Naive thymus-derived CD4-positive, alpha-beta T cell (primary cell): ENCODE measurements at regions of chr6 and their contacts with region 1.

Region 1: GRCh38 chr6:137799950-137800568 is 67.0 kb upstream of the TNFAIP3 start:
- DNase-seq: peak in 7 of 9 donors; percentile 75 to 87 (median 81)
- ATAC-seq: peak; percentile 91
- H3K4me3 ChIP-seq: no peak overlapping the region
- H3K4me3 Mint-ChIP-seq: peak overlapping the region in 9 of 10 donors; percentile 0 to 71 (median 49)
- H3K27ac ChIP-seq: peak overlapping the region; percentile 50
- H3K27ac Mint-ChIP-seq: peak overlapping the region; percentile 70 to 97 (median 89)
- H3K4me1 ChIP-seq: peaks cover 15 to 47% of the 10 kb centered on the region in 2 donors
- H3K4me1 Mint-ChIP-seq: peaks cover 27 to 72% (median 64%) of the 10 kb centered on the region in 7 donors
- H3K27me3 ChIP-seq: no peaks in the 10 kb centered on the region
- H3K27me3 Mint-ChIP-seq: no peaks in the 10 kb centered on the region

Region 2: DNA sequence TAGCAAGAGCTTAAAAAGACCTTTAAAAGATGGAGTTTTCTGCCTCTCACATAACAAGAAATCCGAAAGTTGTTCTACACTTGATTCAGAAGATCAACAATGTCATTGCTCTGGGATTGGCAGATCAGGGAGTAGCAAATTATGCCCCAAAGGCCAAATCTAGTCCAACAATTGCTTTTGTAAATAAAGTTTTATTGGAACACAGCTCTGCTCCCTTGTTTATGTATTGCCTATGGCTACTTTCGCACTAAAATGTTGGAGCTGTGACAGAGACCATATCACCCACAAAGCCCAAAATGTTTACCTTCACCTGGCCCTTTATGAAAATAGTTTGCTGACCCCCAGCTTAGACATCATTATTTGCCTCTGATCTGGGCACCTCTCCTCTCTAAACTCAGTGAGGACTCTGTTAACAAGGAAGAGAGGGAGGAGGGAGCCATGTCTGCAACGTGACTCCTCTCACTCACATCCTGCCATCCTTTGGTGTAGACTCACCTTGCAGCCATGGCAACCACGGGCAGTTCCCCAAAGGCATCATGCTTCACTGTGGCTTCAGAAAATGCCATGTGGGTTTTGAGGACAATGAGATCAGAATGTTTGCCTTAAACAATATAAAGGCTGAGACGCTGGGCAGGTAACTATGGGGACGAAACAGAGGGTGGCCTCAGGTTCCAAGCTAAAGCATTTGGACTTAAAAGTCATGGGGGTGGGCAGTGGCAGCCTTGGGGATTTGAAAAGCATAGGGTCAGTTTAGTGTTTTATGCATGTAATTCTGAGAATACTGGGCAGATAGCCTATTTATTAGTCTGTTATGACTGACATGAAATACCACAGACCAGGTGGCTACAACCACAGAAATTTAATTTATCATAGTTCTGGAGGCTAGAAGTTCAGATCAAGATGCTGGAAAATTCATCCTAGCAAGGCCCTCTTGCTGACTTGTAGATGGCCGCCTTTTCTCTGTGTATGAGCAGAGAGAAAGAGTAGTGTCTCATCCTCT is 82.7 kb before region 1 on chr6:
- CTCF ChIA-PET with region 1: interaction called, 3 read pairs
- POLR2A ChIA-PET with region 1: interaction called, 4 read pairs
- intact Hi-C with region 1: loop called in 1 of 2 experiments (anchors 2 kb)
- DNase-seq: peak; percentile 44 to 85 (median 76)
- ATAC-seq: peak; percentile 74
- H3K4me3 ChIP-seq: no peak overlapping the region
- H3K4me3 Mint-ChIP-seq: peak overlapping the region in 8 of 10 donors; percentile 1 to 76 (median 23)
- H3K27ac ChIP-seq: peak overlapping the region; percentile 65
- H3K27ac Mint-ChIP-seq: peak overlapping the region; percentile 56 to 96 (median 93)
- H3K4me1 ChIP-seq: peaks cover 17 to 36% of the 10 kb centered on the region in 2 donors
- H3K4me1 Mint-ChIP-seq: peaks cover 23 to 65% (median 40%) of the 10 kb centered on the region in 7 donors
- H3K27me3 ChIP-seq: no peaks in the 10 kb centered on the region
- H3K27me3 Mint-ChIP-seq: no peaks in the 10 kb centered on the region

Region 3: DNA sequence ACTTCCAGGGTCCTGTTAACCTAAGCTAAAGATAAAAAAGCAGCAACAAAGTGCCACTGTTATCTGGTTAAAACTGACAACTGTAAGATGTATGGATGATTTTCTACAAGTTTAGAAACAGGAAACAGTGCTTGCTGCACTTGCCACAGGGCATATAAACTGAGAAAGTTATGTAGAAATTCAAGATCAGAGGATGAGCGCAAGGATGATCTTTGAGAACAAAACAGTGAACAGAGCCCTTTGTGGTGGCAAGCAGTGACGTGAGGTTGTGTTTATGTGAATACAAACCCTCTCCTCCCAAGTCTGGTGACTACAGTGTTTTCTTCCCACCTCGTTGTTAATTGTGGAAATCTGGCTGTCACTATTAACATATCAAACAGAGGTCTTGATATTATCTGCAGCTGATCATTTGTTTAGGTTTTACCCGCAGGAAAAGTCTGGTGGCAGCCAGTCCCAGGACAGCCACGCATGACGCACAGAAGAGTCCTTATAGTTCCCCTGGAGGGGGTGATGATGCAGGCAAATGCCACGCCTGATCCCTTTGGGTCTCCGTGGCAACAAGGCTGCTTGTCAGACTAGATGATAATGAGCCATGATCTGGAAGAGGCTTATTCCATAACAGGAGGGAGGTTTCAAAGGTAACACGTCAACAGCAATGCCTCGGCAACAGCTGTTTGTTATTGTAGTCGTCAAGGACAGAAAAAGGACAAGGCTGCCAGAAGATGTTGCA is 23.9 kb after region 1 on chr6:
- CTCF ChIA-PET with region 1: interaction called, 11 read pairs
- POLR2A ChIA-PET with region 1: interaction called, 18 read pairs
- intact Hi-C with region 1: loop called (anchors 1 kb)
- DNase-seq: peak; percentile 59 to 100 (median 95)
- ATAC-seq: peak; percentile 87
- H3K4me3 ChIP-seq: peak overlapping the region; percentile 33
- H3K4me3 Mint-ChIP-seq: peak overlapping the region; percentile 72 to 86 (median 79)
- H3K27ac ChIP-seq: peak overlapping the region; percentile 99
- H3K27ac Mint-ChIP-seq: peak overlapping the region; percentile 96 to 100 (median 100)
- H3K4me1 ChIP-seq: peaks cover 43 to 76% of the 10 kb centered on the region in 2 donors
- H3K4me1 Mint-ChIP-seq: peaks cover 48 to 98% (median 93%) of the 10 kb centered on the region in 7 donors
- H3K27me3 ChIP-seq: no peaks in the 10 kb centered on the region
- H3K27me3 Mint-ChIP-seq: no peaks in the 10 kb centered on the region

Region 4: DNA sequence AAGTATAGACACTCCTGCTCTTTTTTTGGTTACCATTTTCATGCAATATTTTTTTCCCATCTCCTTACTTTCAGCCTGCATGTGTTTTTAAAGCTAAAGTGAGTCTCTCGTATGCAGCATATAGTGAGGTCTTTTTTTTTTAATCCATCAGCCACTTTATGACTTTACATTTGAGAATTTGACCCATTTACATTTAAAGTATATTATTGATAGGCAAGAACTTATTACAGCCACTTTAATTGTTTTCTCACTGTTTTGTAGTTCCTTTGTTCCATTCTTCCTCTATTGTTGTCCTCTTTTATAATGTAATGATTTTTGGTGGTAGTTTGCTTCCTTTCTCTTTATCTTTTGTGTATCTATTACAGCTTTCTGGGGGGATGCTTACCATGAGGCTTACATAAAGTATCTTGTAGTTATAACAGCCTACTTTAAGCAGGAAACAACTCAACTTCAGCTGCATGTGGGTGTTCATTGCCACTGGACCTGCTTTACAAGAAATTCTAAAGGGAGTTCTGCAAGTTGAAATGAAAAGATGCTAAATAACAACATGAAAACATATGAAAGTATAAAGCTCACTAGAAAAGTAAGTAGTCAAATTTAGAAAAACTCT is 138.8 kb after region 1 on chr6:
- CTCF ChIA-PET with region 1: interaction called, 55 read pairs
- POLR2A ChIA-PET with region 1: no interaction called
- intact Hi-C with region 1: loop called in 1 of 2 experiments (anchors 1 kb)
- DNase-seq: no peak
- ATAC-seq: no peak
- H3K4me3 ChIP-seq: no peak overlapping the region
- H3K4me3 Mint-ChIP-seq: no peak overlapping the region
- H3K27ac ChIP-seq: no peak overlapping the region
- H3K27ac Mint-ChIP-seq: peak overlapping the region in 1 of 9 donors; percentile 44
- H3K4me1 ChIP-seq: no peaks in the 10 kb centered on the region
- H3K4me1 Mint-ChIP-seq: peaks cover 0 to 34% (median 7%) of the 10 kb centered on the region in 7 donors
- H3K27me3 ChIP-seq: no peaks in the 10 kb centered on the region
- H3K27me3 Mint-ChIP-seq: no peaks in the 10 kb centered on the region

Region 5: GRCh38 chr6:138007014-138007472 is 207.0 kb after region 1 on chr6:
- CTCF ChIA-PET with region 1: interaction called, 10 read pairs
- POLR2A ChIA-PET with region 1: no interaction called
- intact Hi-C with region 1: no loop called
- DNase-seq: peak in 2 of 9 donors; percentile 12 to 30
- ATAC-seq: no peak
- H3K4me3 ChIP-seq: no peak overlapping the region
- H3K4me3 Mint-ChIP-seq: no peak overlapping the region
- H3K27ac ChIP-seq: no peak overlapping the region
- H3K27ac Mint-ChIP-seq: peak overlapping the region in 2 of 9 donors; percentile 63 to 77
- H3K4me1 ChIP-seq: no peaks in the 10 kb centered on the region
- H3K4me1 Mint-ChIP-seq: peaks cover 0 to 18% (median 5%) of the 10 kb centered on the region in 7 donors
- H3K27me3 ChIP-seq: no peaks in the 10 kb centered on the region
- H3K27me3 Mint-ChIP-seq: peaks cover 0 to 11% (median 0%) of the 10 kb centered on the region in 5 donors